B cell (primary cell): ENCODE measurements at regions of chr12 and their contacts with region 1.

Region 1: DNA sequence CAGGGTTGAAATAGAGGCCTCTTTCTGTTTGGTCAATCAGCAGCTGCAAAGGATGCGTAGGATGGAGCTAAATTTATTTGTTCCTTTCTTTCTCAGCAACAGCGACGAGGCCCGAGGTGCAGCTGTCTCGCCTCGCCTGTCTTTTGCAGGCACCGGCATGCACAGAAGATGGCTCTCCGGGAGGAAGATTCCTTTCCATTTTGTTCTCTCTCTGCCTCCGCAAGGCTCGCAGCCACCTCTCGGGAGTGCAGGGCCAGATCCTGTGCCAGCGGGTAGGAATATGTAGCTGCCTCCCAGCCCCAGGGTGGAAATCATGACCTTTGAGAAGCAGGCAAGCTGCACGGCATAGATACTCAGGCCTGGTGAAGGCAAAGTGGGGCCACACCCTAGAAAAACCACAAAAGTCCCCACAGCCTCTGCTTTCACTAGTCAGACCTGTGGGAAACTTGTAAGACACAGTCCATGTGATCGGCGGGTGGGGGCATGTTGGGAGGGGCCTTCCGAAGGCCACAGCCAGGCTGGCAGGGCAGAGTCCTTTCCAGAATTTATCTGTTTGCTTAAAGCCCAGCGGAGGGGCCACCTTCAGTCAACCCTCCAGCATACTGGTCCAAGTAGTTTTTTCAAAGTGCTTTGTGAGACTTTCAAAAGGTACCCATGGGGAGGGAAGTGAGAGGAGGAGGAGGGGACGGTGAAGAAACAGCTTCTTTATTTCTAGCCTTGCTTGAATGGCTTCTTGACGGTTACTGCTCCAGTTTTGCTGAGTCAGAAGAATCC is at the start of gene MAP1LC3B2:
- DNase-seq: peak; percentile 96
- ATAC-seq: peak; percentile 79
- H3K4me3 ChIP-seq: peak within 1 kb of the TSS; percentile 38 to 67 (median 45)
- H3K4me3 Mint-ChIP-seq: peak within 1 kb of the TSS; percentile 91
- H3K27ac ChIP-seq: peak within 1 kb of the TSS; percentile 95 to 99
- H3K27ac Mint-ChIP-seq: peak within 1 kb of the TSS; percentile 100
- H3K4me1 ChIP-seq: peaks cover 42 to 54% of the 10 kb centered on the region in 2 donors
- H3K4me1 Mint-ChIP-seq: peaks cover 48% of the 10 kb centered on the region
- H3K27me3 ChIP-seq: no peaks in the 10 kb centered on the region
- H3K27me3 Mint-ChIP-seq: no peaks in the 10 kb centered on the region
- CTCF ChIP-seq: no peak
- total RNA-seq, gene MAP1LC3B2: 1.0 TPM in 1 of 2 replicates, not detected in the other

Region 2: GRCh38 chr12:116060764-116061163 is 498.6 kb before region 1 on chr12:
- CTCF ChIA-PET with region 1: interaction called, 3 read pairs
- POLR2A ChIA-PET with region 1: no interaction called
- intact Hi-C with region 1: loop called (anchors 1 kb)
- DNase-seq: peak; percentile 76
- ATAC-seq: peak; percentile 84
- H3K4me3 ChIP-seq: peak overlapping the region in 4 of 5 experiments; percentile 15 to 67 (median 38)
- H3K4me3 Mint-ChIP-seq: peak overlapping the region; percentile 84
- H3K27ac ChIP-seq: peak overlapping the region; percentile 48 to 73
- H3K27ac Mint-ChIP-seq: peak overlapping the region; percentile 81
- H3K4me1 ChIP-seq: peaks cover 11 to 12% of the 10 kb centered on the region in 2 donors
- H3K4me1 Mint-ChIP-seq: peaks cover 46% of the 10 kb centered on the region
- H3K27me3 ChIP-seq: no peaks in the 10 kb centered on the region
- H3K27me3 Mint-ChIP-seq: no peaks in the 10 kb centered on the region
- CTCF ChIP-seq: no peak

Region 3: GRCh38 chr12:116508145-116509121 is 50.9 kb before region 1 on chr12:
- CTCF ChIA-PET with region 1: interaction called, 8 read pairs
- POLR2A ChIA-PET with region 1: interaction called, 6 read pairs
- intact Hi-C with region 1: loop called (anchors 2 kb)
- DNase-seq: peak; percentile 65
- ATAC-seq: peak; percentile 92
- H3K4me3 ChIP-seq: peak overlapping the region in 4 of 5 experiments; percentile 38 to 56 (median 48)
- H3K4me3 Mint-ChIP-seq: peak overlapping the region; percentile 87
- H3K27ac ChIP-seq: no peak overlapping the region
- H3K27ac Mint-ChIP-seq: peak overlapping the region; percentile 57
- H3K4me1 ChIP-seq: peaks cover 9 to 16% of the 10 kb centered on the region in 2 donors
- H3K4me1 Mint-ChIP-seq: peaks cover 7% of the 10 kb centered on the region
- H3K27me3 ChIP-seq: peaks cover 0 to 4% (median 0%) of the 10 kb centered on the region in 4 experiments
- H3K27me3 Mint-ChIP-seq: peaks cover 4% of the 10 kb centered on the region
- CTCF ChIP-seq: no peak

Region 4: GRCh38 chr12:116547955-116548501 is 11.3 kb before region 1 on chr12:
- CTCF ChIA-PET with region 1: interaction called, 12 read pairs
- POLR2A ChIA-PET with region 1: interaction called, 9 read pairs
- intact Hi-C with region 1: loop called (anchors 1 kb)
- DNase-seq: peak; percentile 73
- ATAC-seq: peak; percentile 80
- H3K4me3 ChIP-seq: peak overlapping the region in 1 of 5 experiments; percentile 42
- H3K4me3 Mint-ChIP-seq: peak overlapping the region; percentile 14
- H3K27ac ChIP-seq: no peak overlapping the region
- H3K27ac Mint-ChIP-seq: peak overlapping the region; percentile 54
- H3K4me1 ChIP-seq: peaks cover 24 to 27% of the 10 kb centered on the region in 2 donors
- H3K4me1 Mint-ChIP-seq: peaks cover 19% of the 10 kb centered on the region
- H3K27me3 ChIP-seq: no peaks in the 10 kb centered on the region
- H3K27me3 Mint-ChIP-seq: no peaks in the 10 kb centered on the region
- CTCF ChIP-seq: no peak

Region 5: GRCh38 chr12:116737774-116738700 is 178.7 kb after region 1 on chr12 and contains the starts of genes RNFT2 and SPRING1:
- CTCF ChIA-PET with region 1: no interaction called
- POLR2A ChIA-PET with region 1: no interaction called
- intact Hi-C with region 1: loop called (anchors 2 kb)
- DNase-seq: peak; percentile 99
- ATAC-seq: peak; percentile 95
- H3K4me3 ChIP-seq: peak within 1 kb of the TSS; percentile 62 to 92 (median 76)
- H3K4me3 Mint-ChIP-seq: peak within 1 kb of the TSS; percentile 97
- H3K27ac ChIP-seq: peak within 1 kb of the TSS; percentile 1 to 81
- H3K27ac Mint-ChIP-seq: peak within 1 kb of the TSS; percentile 90
- H3K4me1 ChIP-seq: peaks cover 18 to 20% of the 10 kb centered on the region in 2 donors
- H3K4me1 Mint-ChIP-seq: peaks cover 33% of the 10 kb centered on the region
- H3K27me3 ChIP-seq: no peaks in the 10 kb centered on the region
- H3K27me3 Mint-ChIP-seq: no peaks in the 10 kb centered on the region
- CTCF ChIP-seq: peak; percentile 7
- total RNA-seq, gene RNFT2: 18.2 and 23.0 TPM in 2 replicates
- total RNA-seq, gene SPRING1: 43.7 and 45.9 TPM in 2 replicates